ENCODE measurements at regions of chr19 and their contacts with region 1.

Region 1: GRCh38 chr19:23273590-23274413 is 23.6 kb upstream of the ZNF724 start:
- DNase-seq: peak; percentile 81 to 95 (median 90)
- ATAC-seq: peak; percentile 97 to 98
- H3K4me3 Mint-ChIP-seq: peak overlapping the region; percentile 95 to 99 (median 97)
- H3K27ac Mint-ChIP-seq: peak overlapping the region; percentile 89 to 99 (median 98)
- H3K4me1 Mint-ChIP-seq: peaks cover 9 to 44% (median 35%) of the 10 kb centered on the region in 4 donors
- H3K27me3 Mint-ChIP-seq: no peaks in the 10 kb centered on the region

Region 2: GRCh38 chr19:23249911-23250649 is 23.7 kb before region 1 on chr19 and contains the start of gene ZNF724:
- POLR2A ChIA-PET with region 1: interaction called, 31 read pairs
- DNase-seq: peak; percentile 73 to 94 (median 87)
- ATAC-seq: peak; percentile 99 to 100
- H3K4me3 Mint-ChIP-seq: peak within 1 kb of the TSS; percentile 95 to 99 (median 98)
- H3K27ac Mint-ChIP-seq: peak within 1 kb of the TSS; percentile 83 to 97 (median 93)
- H3K4me1 Mint-ChIP-seq: peaks cover 5 to 19% (median 9%) of the 10 kb centered on the region in 4 donors
- H3K27me3 Mint-ChIP-seq: no peaks in the 10 kb centered on the region
- polyA plus RNA-seq, gene ZNF724: 1.9 to 2.6 (median 2.3) TPM

Region 3: DNA sequence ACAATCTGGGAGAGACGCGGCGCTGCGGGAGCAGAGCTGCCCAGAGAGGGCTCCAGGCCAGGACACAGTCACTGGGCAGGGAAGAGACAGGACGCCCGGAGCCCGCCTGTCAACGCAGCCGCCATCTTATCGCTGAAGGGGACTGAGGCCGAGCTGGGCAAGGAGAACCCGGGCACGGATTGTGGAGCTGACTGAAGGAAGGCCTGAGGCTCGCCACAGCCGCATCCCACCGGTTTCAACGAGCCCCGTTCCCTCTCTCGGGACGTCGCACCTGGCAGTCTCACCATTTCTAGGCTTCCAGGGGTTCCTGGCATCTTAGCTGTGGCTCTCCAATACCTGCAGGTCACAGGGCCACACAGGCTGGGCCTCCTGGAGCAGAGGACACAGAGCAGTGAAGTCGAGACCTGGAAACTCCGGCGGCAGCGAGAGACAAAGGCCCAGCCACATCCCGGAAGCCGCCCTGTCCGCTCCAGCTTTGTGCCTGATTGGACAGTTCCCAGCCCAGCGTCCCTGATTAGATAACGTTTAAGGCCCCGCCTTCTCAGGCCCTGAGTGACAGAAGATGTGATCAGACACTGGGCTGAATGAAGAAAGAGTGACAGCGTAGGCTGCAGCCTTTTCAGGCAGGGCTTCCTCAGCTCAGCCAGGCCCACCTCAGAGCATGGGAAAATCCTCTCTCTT is 121.4 kb after region 1 on chr19 and contains the start of gene ZNF91:
- POLR2A ChIA-PET with region 1: interaction called, 38 read pairs
- DNase-seq: peak; percentile 77 to 97 (median 92)
- ATAC-seq: peak; percentile 94 to 95
- H3K4me3 Mint-ChIP-seq: peak within 1 kb of the TSS; percentile 93 to 99 (median 96)
- H3K27ac Mint-ChIP-seq: peak within 1 kb of the TSS; percentile 94 to 99 (median 99)
- H3K4me1 Mint-ChIP-seq: peaks cover 11 to 44% (median 36%) of the 10 kb centered on the region in 4 donors
- H3K27me3 Mint-ChIP-seq: no peaks in the 10 kb centered on the region
- polyA plus RNA-seq, gene ZNF91: 44.2 to 53.8 (median 51.7) TPM

Region 4: GRCh38 chr19:24086974-24087595 is 813.3 kb after region 1 on chr19 and contains the start of gene ZNF254:
- POLR2A ChIA-PET with region 1: interaction called, 10 read pairs
- DNase-seq: peak; percentile 49 to 89 (median 76)
- ATAC-seq: peak; percentile 96 to 97
- H3K4me3 Mint-ChIP-seq: peak within 1 kb of the TSS; percentile 92 to 97 (median 96)
- H3K27ac Mint-ChIP-seq: peak within 1 kb of the TSS; percentile 94 to 99 (median 98)
- H3K4me1 Mint-ChIP-seq: peaks cover 5 to 20% (median 11%) of the 10 kb centered on the region in 4 donors
- H3K27me3 Mint-ChIP-seq: no peaks in the 10 kb centered on the region
- polyA plus RNA-seq, gene ZNF254: 5.0 to 8.0 (median 5.4) TPM